OCI-LY7 (cell line): ENCODE measurements at regions of chr3 and their contacts with region 1.

Region 1: DNA sequence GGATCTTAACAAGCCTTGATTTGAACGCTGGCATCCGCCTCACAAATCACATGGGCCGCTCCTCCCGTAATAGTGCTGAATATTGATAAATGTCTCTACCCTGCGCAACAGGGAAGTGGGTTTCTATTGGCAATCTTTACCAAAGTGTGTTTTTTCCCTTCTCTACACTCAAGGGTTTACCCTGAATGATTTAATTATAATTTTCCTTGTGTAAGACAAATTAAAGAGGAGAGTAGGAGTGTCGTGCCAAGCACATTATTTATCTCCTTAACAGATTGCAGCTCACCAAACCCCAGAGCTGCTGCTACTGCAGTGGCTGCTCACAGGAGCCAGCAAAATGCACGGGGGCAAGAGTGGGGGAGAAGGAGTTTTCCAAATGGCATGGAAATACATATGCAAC is 545.8 kb downstream of the FOXP1 start:
- DNase-seq: no peak
- H3K4me3 ChIP-seq: no peak overlapping the region
- H3K27ac ChIP-seq: no peak overlapping the region
- H3K4me1 ChIP-seq: peaks cover 23% of the 10 kb centered on the region
- CTCF ChIP-seq: no peak

Region 2: GRCh38 chr3:71185733-71186455 is 148.1 kb after region 1 on chr3:
- CTCF ChIA-PET with region 1: no interaction called
- POLR2A ChIA-PET with region 1: interaction called, 11 read pairs
- intact Hi-C with region 1: no loop called
- DNase-seq: peak; percentile 10
- H3K4me3 ChIP-seq: no peak overlapping the region
- H3K27ac ChIP-seq: no peak overlapping the region
- H3K4me1 ChIP-seq: peaks cover 17% of the 10 kb centered on the region
- CTCF ChIP-seq: no peak